A549 (cell line): ENCODE measurements at regions of chr18 and their contacts with region 1.

Region 1: GRCh38 chr18:49510393-49511115 is 23.5 kb upstream of the C18orf32 start:
- DNase-seq: peak; percentile 48 to 54
- ATAC-seq: peak; percentile 90 to 92
- H3K4me3 ChIP-seq: no peak overlapping the region
- H3K27ac ChIP-seq: no peak overlapping the region
- H3K4me1 ChIP-seq: no peaks in the 10 kb centered on the region
- CTCF ChIP-seq: peak; percentile 77
- EP300 ChIP-seq: no peak
- POLR2A ChIP-seq: no peak
- RAD21 ChIP-seq: peak; percentile 88 to 91

Region 2: DNA sequence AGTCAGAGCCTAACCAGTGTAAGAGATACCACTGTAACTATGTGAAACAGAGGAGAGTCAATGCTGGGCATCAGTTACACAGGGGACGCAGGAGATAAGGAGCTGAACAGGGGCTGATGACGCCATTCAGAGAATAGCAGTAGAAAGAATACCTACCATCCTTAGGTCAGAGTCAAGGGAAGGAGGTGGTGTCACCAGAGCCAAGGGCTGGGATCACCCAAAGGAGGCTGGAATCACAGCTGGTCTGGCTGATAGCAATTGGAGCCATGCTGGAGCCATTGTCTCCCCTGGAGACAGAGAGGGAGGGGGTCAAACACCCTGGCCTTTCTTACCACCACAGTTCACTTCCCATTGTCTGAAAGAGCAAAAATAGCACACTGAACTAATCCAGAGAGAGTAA is 13.8 kb after region 1 on chr18:
- CTCF ChIA-PET with region 1: interaction called, 14 read pairs
- POLR2A ChIA-PET with region 1: no interaction called
- DNase-seq: no peak
- ATAC-seq: no peak
- H3K4me3 ChIP-seq: no peak overlapping the region
- H3K27ac ChIP-seq: no peak overlapping the region
- H3K4me1 ChIP-seq: peaks cover 6% of the 10 kb centered on the region; the same call in 1 of the 3 replicates
- CTCF ChIP-seq: no peak
- EP300 ChIP-seq: no peak
- POLR2A ChIP-seq: no peak
- RAD21 ChIP-seq: no peak

Region 3: DNA sequence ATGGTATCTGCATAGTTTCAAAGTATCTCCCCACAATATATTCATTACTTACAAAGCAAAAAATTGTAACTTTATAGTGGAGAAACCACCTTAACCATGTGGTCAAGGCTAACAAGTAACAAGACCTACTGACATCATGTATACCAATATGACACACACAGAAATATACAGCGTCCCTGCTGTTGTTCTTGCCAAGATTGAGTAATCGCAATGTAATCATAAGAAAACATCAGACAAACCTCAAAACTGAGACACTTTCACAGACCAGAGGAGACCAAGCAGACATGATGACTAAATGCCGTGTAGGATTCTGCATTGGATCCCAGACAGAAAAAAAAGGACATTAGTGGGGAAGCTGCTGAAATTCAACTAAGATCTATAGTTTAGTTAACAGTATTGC is 179.8 kb after region 1 on chr18:
- CTCF ChIA-PET with region 1: no interaction called
- POLR2A ChIA-PET with region 1: no interaction called
- DNase-seq: peak in 1 of 2 experiments; percentile 53
- ATAC-seq: peak; percentile 47 to 83; a peak in 5 of 6 replicates
- H3K4me3 ChIP-seq: no peak overlapping the region
- H3K27ac ChIP-seq: peak overlapping the region in 1 of 2 experiments; percentile 57; a peak in 4 of 6 replicates
- H3K4me1 ChIP-seq: peaks cover 21% of the 10 kb centered on the region
- CTCF ChIP-seq: no peak
- EP300 ChIP-seq: peak in 1 of 2 experiments; percentile 36; a peak in 2 of 5 replicates
- POLR2A ChIP-seq: no peak
- RAD21 ChIP-seq: no peak

Region 4: GRCh38 chr18:49768051-49768391 is 257.5 kb after region 1 on chr18:
- CTCF ChIA-PET with region 1: interaction called, 12 read pairs
- POLR2A ChIA-PET with region 1: no interaction called
- DNase-seq: peak; percentile 7 to 61
- ATAC-seq: peak; percentile 68 to 74; a peak in 4 of 6 replicates
- H3K4me3 ChIP-seq: no peak overlapping the region
- H3K27ac ChIP-seq: no peak overlapping the region
- H3K4me1 ChIP-seq: no peaks in the 10 kb centered on the region
- CTCF ChIP-seq: peak; percentile 49
- EP300 ChIP-seq: no peak
- POLR2A ChIP-seq: no peak
- RAD21 ChIP-seq: peak; percentile 61 to 72

Region 5: DNA sequence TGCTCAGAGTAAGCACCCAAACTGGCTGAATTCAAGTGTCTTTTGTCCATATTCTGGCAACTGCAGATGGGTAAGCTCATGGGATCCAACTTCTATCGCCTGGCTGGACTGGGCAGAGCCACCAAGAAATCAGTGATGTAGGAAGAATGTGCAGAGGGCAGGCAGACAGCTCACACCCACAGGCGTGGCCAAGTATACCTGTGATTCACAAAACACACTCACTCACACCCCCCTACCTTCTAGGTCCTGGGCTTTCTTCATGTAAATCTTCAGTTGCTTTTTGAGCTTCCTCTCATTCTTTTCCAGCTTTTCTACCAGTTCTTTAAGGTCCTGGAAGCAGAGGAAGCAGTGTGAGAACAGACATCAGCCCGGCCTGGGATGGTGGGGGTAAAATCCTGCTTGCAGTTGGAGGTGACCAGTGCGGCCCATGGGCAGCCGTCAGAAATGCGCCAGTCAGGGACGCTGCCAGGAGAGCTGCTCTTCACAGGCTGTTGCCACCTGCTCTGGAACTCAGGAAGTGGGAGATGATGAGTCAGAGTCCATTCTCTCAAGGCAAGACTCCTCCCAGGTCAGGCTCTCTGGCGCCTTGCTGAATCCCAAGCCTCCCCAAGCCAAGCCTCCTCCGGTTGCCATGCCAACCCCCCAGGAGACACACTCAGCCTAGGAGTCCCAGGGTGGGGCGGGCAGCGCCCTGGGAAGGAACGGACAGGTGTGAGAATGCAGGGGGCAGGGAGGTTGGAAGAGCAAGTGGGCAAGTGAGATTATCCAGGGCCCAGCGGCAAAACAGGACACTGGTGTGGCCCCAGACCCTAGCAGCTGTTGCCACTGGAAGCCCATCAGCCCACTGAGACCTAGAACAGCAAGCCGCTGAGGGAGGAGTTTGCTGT is 339.0 kb after region 1 on chr18:
- CTCF ChIA-PET with region 1: interaction called, 176 read pairs
- POLR2A ChIA-PET with region 1: no interaction called
- DNase-seq: peak; percentile 87 to 92
- ATAC-seq: peak; percentile 96 to 98
- H3K4me3 ChIP-seq: peak overlapping the region; percentile 34
- H3K27ac ChIP-seq: peak overlapping the region; percentile 79 to 86
- H3K4me1 ChIP-seq: peaks cover 24% of the 10 kb centered on the region
- CTCF ChIP-seq: no peak
- EP300 ChIP-seq: no peak
- POLR2A ChIP-seq: peak; percentile 26; the same call in 1 of the 2 replicates
- RAD21 ChIP-seq: no peak

Region 6: DNA sequence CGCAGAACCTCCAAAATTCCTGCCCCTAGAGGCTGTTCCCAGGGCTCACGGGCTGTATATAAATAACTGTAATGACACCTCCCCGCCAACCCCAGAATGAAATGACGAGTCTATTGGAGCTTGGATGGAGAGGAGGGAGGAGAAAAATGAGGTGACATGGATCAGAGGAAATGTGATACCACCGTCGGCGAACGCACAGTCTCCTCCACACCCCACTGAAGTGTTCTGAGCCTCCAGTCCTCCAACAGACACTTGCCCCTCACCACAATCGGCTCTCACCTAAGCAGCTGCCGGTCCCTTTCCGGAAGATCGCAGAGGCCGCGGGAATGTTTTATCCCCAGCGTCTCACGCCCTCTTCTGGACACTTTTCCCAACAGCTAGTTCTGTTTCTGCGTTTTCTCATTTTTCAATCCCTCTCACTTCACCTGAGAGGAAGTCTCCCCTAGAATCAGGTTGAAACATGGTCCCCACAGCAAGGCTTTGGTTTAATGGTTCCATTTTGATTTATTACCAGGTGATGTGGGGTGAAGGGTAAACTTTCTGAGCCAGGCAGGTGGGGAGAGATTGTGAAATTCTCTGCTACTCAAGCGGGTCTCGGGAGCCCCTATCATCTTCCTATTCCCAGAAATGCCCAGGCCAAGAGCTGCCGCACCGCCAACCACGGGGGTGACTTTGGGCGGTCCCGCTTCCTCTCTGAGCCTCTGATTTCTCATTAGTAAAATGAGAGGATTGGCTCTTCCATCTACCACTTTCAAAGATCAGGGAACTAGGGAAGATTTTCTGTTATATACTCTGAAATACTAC is 693.4 kb after region 1 on chr18:
- CTCF ChIA-PET with region 1: interaction called, 14 read pairs
- POLR2A ChIA-PET with region 1: no interaction called
- DNase-seq: peak; percentile 24 to 28
- ATAC-seq: peak; percentile 59 to 76; a peak in 4 of 6 replicates
- H3K4me3 ChIP-seq: no peak overlapping the region
- H3K27ac ChIP-seq: no peak overlapping the region
- H3K4me1 ChIP-seq: no peaks in the 10 kb centered on the region
- CTCF ChIP-seq: peak; percentile 51
- EP300 ChIP-seq: no peak
- POLR2A ChIP-seq: no peak
- RAD21 ChIP-seq: peak; percentile 46 to 56; a peak in 4 of 5 replicates